CD8-positive, alpha-beta T cell (primary cell): ENCODE measurements at regions of chr18 and their contacts with region 1.

Region 1: GRCh38 chr18:23131693-23132319 is 3.5 kb upstream of the CABLES1 start:
- DNase-seq: peak in 8 of 9 experiments; percentile 47 to 84 (median 62)
- ATAC-seq: peak; percentile 54
- H3K4me3 ChIP-seq: no peak overlapping the region
- H3K4me3 Mint-ChIP-seq: no peak overlapping the region
- H3K27ac ChIP-seq: no peak overlapping the region
- H3K27ac Mint-ChIP-seq: no peak overlapping the region
- H3K4me1 ChIP-seq: peaks cover 11% of the 10 kb centered on the region
- H3K4me1 Mint-ChIP-seq: peaks cover 15% of the 10 kb centered on the region
- H3K27me3 ChIP-seq: peaks cover 16 to 17% of the 10 kb centered on the region in 2 experiments
- H3K27me3 Mint-ChIP-seq: peaks cover 38% of the 10 kb centered on the region
- CTCF ChIP-seq: peak; percentile 90

Region 2: DNA sequence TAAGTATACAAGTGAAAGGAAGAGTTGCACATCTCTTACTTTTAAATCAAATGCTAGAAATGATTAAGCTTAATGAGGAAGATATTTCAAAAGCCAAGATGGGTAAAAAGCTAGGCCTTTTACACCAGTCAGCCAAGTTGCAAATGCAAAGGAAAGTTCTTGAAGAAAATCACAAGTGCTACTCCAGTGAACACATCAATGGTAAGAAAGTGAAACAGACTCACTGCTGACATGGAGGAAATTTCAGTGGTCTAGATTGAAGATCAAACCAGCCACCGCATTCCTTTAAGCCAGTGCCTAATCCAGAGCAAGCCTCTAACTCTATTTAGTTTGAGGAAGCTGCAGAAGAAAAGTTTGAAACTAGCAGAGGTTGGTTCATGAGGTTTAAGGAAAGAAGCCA is 119.6 kb before region 1 on chr18:
- CTCF ChIA-PET with region 1: no interaction called
- POLR2A ChIA-PET with region 1: no interaction called
- intact Hi-C with region 1: no loop called
- DNase-seq: peak in 1 of 9 experiments; percentile 5
- ATAC-seq: no peak
- H3K4me3 ChIP-seq: no peak overlapping the region
- H3K4me3 Mint-ChIP-seq: no peak overlapping the region
- H3K27ac ChIP-seq: no peak overlapping the region
- H3K27ac Mint-ChIP-seq: no peak overlapping the region
- H3K4me1 ChIP-seq: no peaks in the 10 kb centered on the region
- H3K4me1 Mint-ChIP-seq: peaks cover 8% of the 10 kb centered on the region
- H3K27me3 ChIP-seq: no peaks in the 10 kb centered on the region
- H3K27me3 Mint-ChIP-seq: no peaks in the 10 kb centered on the region
- CTCF ChIP-seq: no peak

Region 3: GRCh38 chr18:23032030-23032582 is 99.7 kb before region 1 on chr18:
- CTCF ChIA-PET with region 1: interaction called, 36 read pairs
- POLR2A ChIA-PET with region 1: no interaction called
- intact Hi-C with region 1: loop called (anchors 1 kb)
- DNase-seq: no peak
- ATAC-seq: no peak
- H3K4me3 ChIP-seq: no peak overlapping the region
- H3K4me3 Mint-ChIP-seq: no peak overlapping the region
- H3K27ac ChIP-seq: no peak overlapping the region
- H3K27ac Mint-ChIP-seq: no peak overlapping the region
- H3K4me1 ChIP-seq: no peaks in the 10 kb centered on the region
- H3K4me1 Mint-ChIP-seq: no peaks in the 10 kb centered on the region
- H3K27me3 ChIP-seq: no peaks in the 10 kb centered on the region
- H3K27me3 Mint-ChIP-seq: no peaks in the 10 kb centered on the region
- CTCF ChIP-seq: no peak

Region 4: GRCh38 chr18:23231340-23232021 is 99.7 kb after region 1 on chr18:
- CTCF ChIA-PET with region 1: interaction called, 3 read pairs
- POLR2A ChIA-PET with region 1: no interaction called
- intact Hi-C with region 1: loop called in 1 of 2 experiments (anchors 10 kb)
- DNase-seq: peak; percentile 41 to 95 (median 66)
- ATAC-seq: peak; percentile 85
- H3K4me3 ChIP-seq: no peak overlapping the region
- H3K4me3 Mint-ChIP-seq: peak overlapping the region; percentile 9
- H3K27ac ChIP-seq: peak overlapping the region; percentile 5 to 84
- H3K27ac Mint-ChIP-seq: peak overlapping the region; percentile 92
- H3K4me1 ChIP-seq: peaks cover 11% of the 10 kb centered on the region
- H3K4me1 Mint-ChIP-seq: peaks cover 23% of the 10 kb centered on the region
- H3K27me3 ChIP-seq: no peaks in the 10 kb centered on the region
- H3K27me3 Mint-ChIP-seq: no peaks in the 10 kb centered on the region
- CTCF ChIP-seq: no peak

Region 5: DNA sequence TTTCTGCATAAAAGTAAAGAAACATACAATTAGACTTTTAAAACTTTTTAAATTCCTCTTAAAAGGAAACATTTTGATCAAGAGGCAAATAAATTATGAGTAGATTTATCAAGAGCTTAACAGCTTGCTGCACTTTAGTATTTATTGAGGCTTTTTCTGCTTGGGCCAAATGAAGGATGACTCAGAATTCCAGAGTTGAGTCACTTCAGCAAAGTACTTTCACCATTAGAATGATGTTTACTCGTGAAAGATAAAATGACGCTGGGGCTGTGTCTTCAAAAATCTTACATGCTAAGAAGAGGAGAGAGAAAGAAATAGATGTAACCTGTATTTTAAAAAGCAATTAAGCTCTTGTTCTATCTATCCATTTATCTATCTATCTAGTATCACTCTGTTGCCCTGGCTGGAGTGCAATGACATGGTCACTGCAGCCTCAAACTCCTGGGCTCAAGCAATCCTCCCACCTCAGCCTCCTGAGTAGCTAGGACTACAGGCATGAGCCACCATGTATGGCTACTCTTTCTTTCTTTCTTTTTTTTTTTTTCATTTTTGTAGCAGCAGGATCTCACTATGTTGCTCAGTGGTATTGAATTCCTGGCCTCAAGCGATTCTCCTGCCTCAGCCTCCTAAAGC is 246.0 kb after region 1 on chr18:
- CTCF ChIA-PET with region 1: interaction called, 6 read pairs
- POLR2A ChIA-PET with region 1: no interaction called
- intact Hi-C with region 1: loop called in 1 of 2 experiments (anchors 1 kb)
- DNase-seq: no peak
- ATAC-seq: no peak
- H3K4me3 ChIP-seq: no peak overlapping the region
- H3K4me3 Mint-ChIP-seq: no peak overlapping the region
- H3K27ac ChIP-seq: no peak overlapping the region
- H3K27ac Mint-ChIP-seq: no peak overlapping the region
- H3K4me1 ChIP-seq: no peaks in the 10 kb centered on the region
- H3K4me1 Mint-ChIP-seq: no peaks in the 10 kb centered on the region
- H3K27me3 ChIP-seq: no peaks in the 10 kb centered on the region
- H3K27me3 Mint-ChIP-seq: no peaks in the 10 kb centered on the region
- CTCF ChIP-seq: no peak

Region 6: GRCh38 chr18:23412351-23412964 is 280.7 kb after region 1 on chr18:
- CTCF ChIA-PET with region 1: interaction called, 33 read pairs
- POLR2A ChIA-PET with region 1: interaction called, 3 read pairs
- intact Hi-C with region 1: loop called (anchors 1 kb)
- DNase-seq: no peak
- ATAC-seq: no peak
- H3K4me3 ChIP-seq: no peak overlapping the region
- H3K4me3 Mint-ChIP-seq: no peak overlapping the region
- H3K27ac ChIP-seq: no peak overlapping the region
- H3K27ac Mint-ChIP-seq: no peak overlapping the region
- H3K4me1 ChIP-seq: no peaks in the 10 kb centered on the region
- H3K4me1 Mint-ChIP-seq: no peaks in the 10 kb centered on the region
- H3K27me3 ChIP-seq: no peaks in the 10 kb centered on the region
- H3K27me3 Mint-ChIP-seq: no peaks in the 10 kb centered on the region
- CTCF ChIP-seq: no peak